ENCODE measurements at regions of chr4 and their contacts with region 1.

Region 1: GRCh38 chr4:4260253-4260652 is 12.2 kb upstream of the TMEM128 start:
- DNase-seq: no peak
- H3K4me3 Mint-ChIP-seq: no peak overlapping the region
- H3K27ac Mint-ChIP-seq: no peak overlapping the region
- H3K4me1 Mint-ChIP-seq: no peaks in the 10 kb centered on the region
- H3K27me3 Mint-ChIP-seq: peaks cover 4% of the 10 kb centered on the region

Region 2: DNA sequence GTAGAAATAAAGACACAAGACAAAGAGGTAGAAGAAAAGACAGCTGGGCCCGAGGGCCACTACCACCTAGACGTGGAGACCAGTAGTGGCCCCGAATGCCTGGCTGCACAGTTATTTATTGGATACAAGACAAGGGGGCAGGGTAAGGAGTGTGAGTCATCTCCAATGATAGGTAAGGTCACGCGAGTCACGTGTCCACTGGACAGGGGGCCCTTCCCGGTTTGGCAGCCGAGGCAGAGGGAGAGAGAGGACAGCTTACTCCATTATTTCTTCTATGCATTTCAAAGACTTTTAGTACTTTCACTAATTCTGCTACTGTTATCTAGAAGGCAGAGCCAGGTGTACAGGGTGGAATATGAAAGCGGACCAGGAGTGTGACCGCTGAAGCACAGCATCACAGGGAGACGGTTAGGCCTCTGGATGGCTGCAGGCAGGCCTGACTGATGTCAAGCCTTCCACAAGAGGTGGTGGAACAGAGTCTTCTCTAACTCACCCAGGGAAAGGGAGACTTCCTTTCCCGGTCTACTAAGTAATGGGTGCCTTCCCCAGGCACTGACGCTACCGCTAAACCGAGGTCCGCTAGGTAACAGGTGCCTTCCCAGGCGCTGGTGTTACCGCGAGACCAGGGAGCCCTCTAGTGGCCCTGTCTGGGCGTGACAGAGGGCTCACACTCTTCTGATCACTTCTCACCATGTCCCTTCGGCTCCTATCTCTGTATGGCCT is 74.7 kb after region 1 on chr4:
- intact Hi-C with region 1: loop called (anchors 2 kb)
- DNase-seq: peak; percentile 59
- H3K4me3 Mint-ChIP-seq: no peak overlapping the region
- H3K27ac Mint-ChIP-seq: no peak overlapping the region
- H3K4me1 Mint-ChIP-seq: peaks cover 4% of the 10 kb centered on the region
- H3K27me3 Mint-ChIP-seq: no peaks in the 10 kb centered on the region

Region 3: DNA sequence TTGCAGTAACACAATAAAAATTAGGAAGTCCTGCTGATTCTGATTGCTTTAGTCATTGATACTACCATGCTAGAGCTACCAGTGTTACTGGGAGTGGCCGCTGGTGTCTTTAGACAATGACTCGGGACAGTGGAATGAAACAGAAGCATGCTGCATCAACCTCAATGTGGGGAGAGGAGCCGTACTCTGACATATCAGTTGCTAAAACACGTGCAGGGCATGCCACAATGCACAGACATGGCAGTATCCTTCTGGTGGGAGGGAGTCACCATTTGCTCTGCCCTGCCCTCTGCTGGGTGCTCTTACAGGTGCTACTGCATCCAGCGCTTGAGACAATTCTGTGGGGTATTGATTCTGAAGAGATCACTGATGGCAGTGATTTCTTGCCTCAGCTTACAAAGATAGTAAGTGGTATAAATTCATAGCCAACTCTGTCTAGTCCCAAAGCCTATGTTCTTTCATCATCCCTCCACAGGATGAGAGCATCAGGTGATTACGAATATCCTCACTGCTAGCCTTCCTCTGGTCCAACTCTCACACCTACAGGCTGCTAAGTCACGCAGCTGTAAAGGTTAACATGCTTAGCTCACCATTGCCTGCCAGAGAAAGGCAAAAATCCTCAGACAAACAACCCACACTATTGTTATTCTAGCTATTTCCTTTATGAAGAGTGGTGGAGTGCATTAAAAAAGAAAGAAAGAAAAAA is 170.4 kb after region 1 on chr4:
- intact Hi-C with region 1: loop called (anchors 5 kb)
- DNase-seq: peak; percentile 18
- H3K4me3 Mint-ChIP-seq: no peak overlapping the region
- H3K27ac Mint-ChIP-seq: no peak overlapping the region
- H3K4me1 Mint-ChIP-seq: peaks cover 5% of the 10 kb centered on the region
- H3K27me3 Mint-ChIP-seq: no peaks in the 10 kb centered on the region